Heart right ventricle (tissue), 16 donors: ENCODE measurements at regions of chr17 and their contacts with region 1.

Region 1: GRCh38 chr17:82297714-82298537 is 19.5 kb downstream of the CD7 start:
- DNase-seq: peak; percentile 85 to 89
- ATAC-seq: peak; percentile 80 to 89 (median 85)
- H3K4me3 ChIP-seq: peak overlapping the region in 9 of 10 donors; percentile 31 to 57 (median 49)
- H3K27ac ChIP-seq: peak overlapping the region; percentile 66 to 99 (median 88)
- H3K4me1 ChIP-seq: peaks cover 11 to 87% (median 31%) of the 10 kb centered on the region in 9 donors
- H3K27me3 ChIP-seq: peaks cover 0 to 18% (median 0%) of the 10 kb centered on the region in 7 donors
- CTCF ChIP-seq: no peak

Region 2: GRCh38 chr17:82230627-82231311 is 67.2 kb before region 1 on chr17:
- intact Hi-C with region 1: loop called in 1 of 10 experiments (anchors 5 kb)
- DNase-seq: peak; percentile 88 to 92
- ATAC-seq: peak; percentile 65 to 77 (median 74)
- H3K4me3 ChIP-seq: peak overlapping the region; percentile 46 to 88 (median 73)
- H3K27ac ChIP-seq: peak overlapping the region; percentile 85 to 100 (median 97)
- H3K4me1 ChIP-seq: peaks cover 16 to 83% (median 52%) of the 10 kb centered on the region in 9 donors
- H3K27me3 ChIP-seq: no peaks in the 10 kb centered on the region
- CTCF ChIP-seq: peak; percentile 47 to 77 (median 62)